Pancreas (tissue), 10 donors: ENCODE measurements at regions of chr16 and their contacts with region 1.

Region 1: DNA sequence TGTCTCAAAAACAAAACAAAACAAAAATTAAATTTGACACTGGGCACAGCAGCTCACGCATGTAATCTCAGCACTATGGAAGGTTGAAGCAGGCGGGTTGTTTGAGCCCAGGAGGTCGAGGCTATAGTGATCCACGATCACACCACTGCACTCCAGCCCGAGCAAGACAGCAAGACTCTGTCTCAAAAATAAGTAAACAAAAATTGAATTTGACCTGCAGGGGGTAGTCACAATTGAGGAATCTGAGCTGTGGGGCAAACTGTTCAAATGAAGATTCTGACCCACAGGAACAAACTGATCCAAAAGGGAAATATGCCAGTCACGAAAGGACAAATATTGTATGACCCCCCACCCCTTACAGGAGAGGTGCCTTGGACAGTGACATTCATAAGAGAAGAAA is 29.8 kb downstream of the ANKRD11 start:
- DNase-seq: no peak
- ATAC-seq: no peak
- H3K4me3 ChIP-seq: no peak overlapping the region
- H3K27ac ChIP-seq: no peak overlapping the region
- H3K4me1 ChIP-seq: no peaks in the 10 kb centered on the region
- H3K27me3 ChIP-seq: no peaks in the 10 kb centered on the region
- CTCF ChIP-seq: no peak

Region 2: GRCh38 chr16:89187155-89188041 is 273.2 kb before region 1 on chr16:
- intact Hi-C with region 1: no loop called
- DNase-seq: peak in 3 of 6 donors; percentile 44 to 79 (median 58)
- ATAC-seq: peak in 3 of 4 donors; percentile 9 to 49 (median 38)
- H3K4me3 ChIP-seq: no peak overlapping the region
- H3K27ac ChIP-seq: no peak overlapping the region
- H3K4me1 ChIP-seq: peaks cover 0 to 4% (median 0%) of the 10 kb centered on the region in 3 donors
- H3K27me3 ChIP-seq: no peaks in the 10 kb centered on the region
- CTCF ChIP-seq: no peak

Region 3: DNA sequence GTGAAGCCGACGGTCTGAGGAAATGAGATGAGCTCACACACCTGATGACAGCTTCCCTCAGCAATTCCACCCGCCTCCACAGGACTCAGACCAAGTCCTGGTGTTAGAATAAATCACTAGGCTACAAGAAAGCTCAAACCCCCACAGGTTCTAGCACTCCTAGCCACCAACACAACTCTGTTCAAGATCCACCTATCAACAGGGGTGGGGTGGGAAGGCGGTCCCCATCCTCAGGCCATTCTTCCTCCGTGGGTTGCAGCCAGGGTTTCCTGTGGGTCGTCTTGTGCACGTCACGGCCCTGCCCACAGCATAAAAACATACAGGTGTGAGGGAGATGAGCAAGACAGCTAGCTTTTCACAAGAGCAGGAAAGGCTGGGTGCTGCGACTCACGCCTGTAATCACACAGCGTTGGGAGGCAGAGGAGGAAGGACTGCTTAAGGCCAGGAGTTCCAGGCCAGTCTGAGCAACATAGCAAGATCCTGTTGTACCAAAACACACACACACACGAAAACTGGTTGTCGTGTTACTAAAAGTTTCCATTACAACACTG is 51.3 kb before region 1 on chr16:
- intact Hi-C with region 1: loop called in 1 of 3 experiments (anchors 10 kb)
- DNase-seq: no peak
- ATAC-seq: no peak
- H3K4me3 ChIP-seq: no peak overlapping the region
- H3K27ac ChIP-seq: peak overlapping the region in 3 of 4 donors; percentile 18 to 75 (median 23)
- H3K4me1 ChIP-seq: peaks cover 55 to 88% (median 76%) of the 10 kb centered on the region in 3 donors
- H3K27me3 ChIP-seq: no peaks in the 10 kb centered on the region
- CTCF ChIP-seq: no peak

Region 4: DNA sequence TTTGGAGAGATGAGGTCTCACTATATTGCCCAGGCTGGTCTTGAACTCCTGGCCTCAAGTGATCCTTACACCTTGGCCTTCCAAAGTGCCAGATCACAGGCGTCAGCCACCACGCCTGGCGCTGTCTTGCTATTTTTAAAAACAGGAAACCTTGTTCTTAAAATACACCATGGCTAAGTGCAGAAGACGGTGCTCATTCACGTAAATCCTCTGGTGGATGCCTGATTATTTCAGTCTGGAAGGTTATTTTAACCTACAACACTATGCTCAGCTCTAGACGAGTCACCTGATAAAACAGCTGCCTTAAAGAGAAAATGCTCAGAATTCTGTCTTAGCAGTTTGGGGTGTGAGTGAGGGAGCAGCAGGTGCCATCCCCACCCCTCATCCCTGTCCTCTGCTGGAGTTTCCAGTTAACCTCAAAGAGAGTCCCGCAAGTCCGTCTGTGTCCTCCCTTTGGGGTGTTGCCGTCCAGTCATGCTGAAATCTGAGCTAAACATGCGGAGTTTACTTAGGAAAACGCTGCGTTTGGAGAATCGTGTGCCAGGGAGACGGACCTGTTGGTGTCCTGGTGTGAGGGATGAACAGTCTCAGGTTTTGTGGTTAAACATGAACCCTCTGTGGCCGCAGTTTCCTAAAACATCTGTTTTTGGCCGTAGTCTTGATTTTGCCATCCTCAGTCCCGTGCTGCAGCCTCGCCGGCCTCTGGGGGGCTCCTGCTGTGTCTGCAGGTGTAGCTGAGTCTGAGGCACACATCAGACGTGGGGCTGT is 64.8 kb after region 1 on chr16:
- intact Hi-C with region 1: no loop called
- DNase-seq: no peak
- ATAC-seq: no peak
- H3K4me3 ChIP-seq: no peak overlapping the region
- H3K27ac ChIP-seq: no peak overlapping the region
- H3K4me1 ChIP-seq: no peaks in the 10 kb centered on the region
- H3K27me3 ChIP-seq: no peaks in the 10 kb centered on the region
- CTCF ChIP-seq: no peak